ENCODE measurements at regions of chr11 and their contacts with region 1.

Region 1: DNA sequence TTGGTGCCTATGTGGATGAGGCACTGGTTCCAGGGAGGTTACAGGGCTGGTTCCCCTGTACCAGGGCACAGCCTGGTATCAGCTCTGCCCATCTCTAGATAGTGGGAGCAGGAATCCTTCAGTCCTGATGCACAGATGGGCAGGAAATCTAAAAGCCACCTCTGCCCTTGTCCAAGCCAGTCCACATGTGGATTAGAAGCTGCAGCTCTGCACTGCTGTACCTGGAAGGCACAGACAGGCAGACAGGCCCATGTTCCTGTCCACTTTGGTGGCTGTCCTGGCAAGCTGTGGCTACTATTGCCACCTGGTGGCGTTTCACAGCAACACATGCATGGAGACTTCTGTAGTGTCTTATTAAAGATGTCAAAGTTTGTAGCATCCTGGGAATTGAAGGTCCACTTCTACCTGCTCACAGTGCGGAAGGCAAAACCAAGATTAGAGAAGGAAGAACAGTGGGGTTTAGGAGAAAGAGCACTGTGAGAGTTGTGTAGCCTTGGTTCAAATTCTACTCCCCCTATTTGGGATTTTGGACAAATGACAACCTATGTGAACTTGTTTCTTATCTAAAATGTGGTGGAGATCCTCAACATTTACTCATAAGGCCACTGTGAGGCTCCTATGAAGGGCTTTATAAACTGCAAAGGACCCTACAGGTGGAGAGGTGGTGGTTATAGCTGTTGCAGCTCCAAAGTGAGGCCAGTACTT is 30.1 kb downstream of the NAV2 start:
- DNase-seq: peak; percentile 78
- H3K4me3 Mint-ChIP-seq: no peak overlapping the region
- H3K27ac Mint-ChIP-seq: no peak overlapping the region
- H3K4me1 Mint-ChIP-seq: peaks cover 15% of the 10 kb centered on the region
- H3K27me3 Mint-ChIP-seq: no peaks in the 10 kb centered on the region
- CTCF ChIP-seq: peak; percentile 89

Region 2: DNA sequence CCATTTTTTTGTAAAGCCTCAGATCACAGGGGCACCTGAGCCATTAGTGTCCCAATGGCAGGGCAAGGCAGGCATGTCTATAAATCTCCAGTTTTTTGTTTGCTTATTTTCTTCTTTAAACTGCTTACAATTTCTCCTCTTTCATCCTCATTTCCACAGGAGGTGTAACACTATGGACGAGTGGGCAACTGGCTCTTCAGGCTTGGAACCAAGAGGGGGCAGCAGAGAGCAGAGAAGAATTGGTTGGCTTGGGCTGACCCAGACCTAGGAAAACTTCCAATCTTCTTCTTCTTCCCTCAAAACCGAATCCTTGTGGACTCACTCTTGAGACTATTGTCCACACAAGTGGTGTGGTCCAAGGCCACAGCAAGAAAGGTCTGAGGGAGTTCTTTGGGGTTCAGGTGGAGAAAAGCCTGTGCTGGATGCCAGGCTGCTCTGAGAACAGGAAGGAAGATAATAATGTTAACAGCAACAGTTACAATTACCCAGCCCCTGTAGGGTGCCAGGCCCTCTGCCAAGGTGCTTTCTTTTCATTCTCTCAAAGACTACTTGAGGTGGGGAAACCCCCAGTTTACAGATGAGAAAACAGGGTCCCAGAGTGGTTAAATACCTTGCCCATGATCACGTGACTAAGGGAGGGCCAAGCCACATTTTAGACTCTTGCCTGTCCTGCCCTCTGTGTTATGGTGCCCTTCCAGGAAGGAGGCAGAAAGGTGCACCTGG is 431.3 kb before region 1 on chr11:
- CTCF ChIA-PET with region 1: interaction called, 4 read pairs
- POLR2A ChIA-PET with region 1: no interaction called
- intact Hi-C with region 1: loop called (anchors 5 kb)
- DNase-seq: peak; percentile 71
- H3K4me3 Mint-ChIP-seq: no peak overlapping the region
- H3K27ac Mint-ChIP-seq: no peak overlapping the region
- H3K4me1 Mint-ChIP-seq: peaks cover 5% of the 10 kb centered on the region
- H3K27me3 Mint-ChIP-seq: no peaks in the 10 kb centered on the region
- CTCF ChIP-seq: peak; percentile 59

Region 3: GRCh38 chr11:19561011-19561410 is 181.7 kb before region 1 on chr11:
- CTCF ChIA-PET with region 1: interaction called, 408 read pairs
- POLR2A ChIA-PET with region 1: interaction called, 7 read pairs
- intact Hi-C with region 1: loop called (anchors 1 kb)
- DNase-seq: peak; percentile 38
- H3K4me3 Mint-ChIP-seq: no peak overlapping the region
- H3K27ac Mint-ChIP-seq: no peak overlapping the region
- H3K4me1 Mint-ChIP-seq: peaks cover 6% of the 10 kb centered on the region
- H3K27me3 Mint-ChIP-seq: peaks cover 5% of the 10 kb centered on the region
- CTCF ChIP-seq: no peak

Region 4: GRCh38 chr11:19573666-19574065 is 169.1 kb before region 1 on chr11:
- CTCF ChIA-PET with region 1: interaction called, 408 read pairs
- POLR2A ChIA-PET with region 1: no interaction called
- intact Hi-C with region 1: no loop called
- DNase-seq: no peak
- H3K4me3 Mint-ChIP-seq: no peak overlapping the region
- H3K27ac Mint-ChIP-seq: no peak overlapping the region
- H3K4me1 Mint-ChIP-seq: no peaks in the 10 kb centered on the region
- H3K27me3 Mint-ChIP-seq: no peaks in the 10 kb centered on the region
- CTCF ChIP-seq: no peak

Region 5: GRCh38 chr11:19607652-19608360 is 134.9 kb before region 1 on chr11:
- CTCF ChIA-PET with region 1: interaction called, 10 read pairs
- POLR2A ChIA-PET with region 1: no interaction called
- intact Hi-C with region 1: no loop called
- DNase-seq: no peak
- H3K4me3 Mint-ChIP-seq: no peak overlapping the region
- H3K27ac Mint-ChIP-seq: no peak overlapping the region
- H3K4me1 Mint-ChIP-seq: peaks cover 10% of the 10 kb centered on the region
- H3K27me3 Mint-ChIP-seq: no peaks in the 10 kb centered on the region
- CTCF ChIP-seq: no peak

Region 6: DNA sequence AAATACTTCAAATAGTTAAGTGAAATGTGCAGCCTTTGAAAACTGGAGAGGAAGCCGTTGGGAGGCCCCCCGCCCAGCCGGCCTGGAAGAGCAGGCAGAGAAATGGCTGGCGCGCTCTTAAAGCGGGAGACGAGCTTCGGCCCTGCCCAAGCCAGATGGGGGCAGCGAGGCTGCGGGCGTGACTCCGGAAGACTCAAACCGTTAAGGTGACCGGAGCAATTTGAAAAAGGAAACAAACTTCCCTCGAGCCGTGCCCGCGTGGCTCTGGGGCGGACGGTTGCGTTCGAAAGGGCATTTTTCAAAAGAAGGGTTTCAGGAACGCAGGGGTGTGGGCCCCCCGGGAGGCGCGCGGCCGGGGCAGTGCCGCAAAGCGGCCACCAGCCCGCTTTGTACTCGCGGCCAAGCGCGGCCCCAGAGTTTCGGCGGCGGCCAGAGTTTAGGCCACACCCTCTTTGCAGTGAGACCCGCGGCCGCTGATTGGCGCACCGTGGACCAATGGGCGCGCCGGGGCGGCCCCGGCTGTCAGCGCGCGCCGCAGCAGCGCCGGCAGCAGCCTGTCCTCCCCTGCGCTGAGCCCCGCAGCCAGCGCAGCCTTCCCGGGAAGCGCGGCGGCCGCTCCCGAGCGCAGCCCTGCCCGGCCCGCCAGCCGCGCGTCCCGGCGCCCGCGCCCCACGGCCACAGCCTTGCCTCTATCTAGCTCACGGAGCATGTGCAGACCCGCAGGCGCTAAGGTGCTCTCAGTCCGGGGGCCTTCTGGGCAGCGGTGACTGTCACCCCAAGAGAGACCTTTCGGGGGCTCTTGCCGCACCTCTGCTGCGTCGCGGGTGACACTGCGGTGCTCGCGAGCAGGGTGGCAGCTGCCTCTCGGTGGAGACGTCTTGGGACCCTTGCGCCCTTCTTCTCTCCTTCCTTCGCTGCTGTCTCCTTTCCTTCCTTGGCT is 30.2 kb before region 1 on chr11 and contains the start of gene NAV2:
- CTCF ChIA-PET with region 1: interaction called, 11 read pairs
- POLR2A ChIA-PET with region 1: interaction called, 3 read pairs
- intact Hi-C with region 1: loop called (anchors 2 kb)
- DNase-seq: peak; percentile 94
- H3K4me3 Mint-ChIP-seq: peak within 1 kb of the TSS; percentile 85
- H3K27ac Mint-ChIP-seq: peak within 1 kb of the TSS; percentile 94
- H3K4me1 Mint-ChIP-seq: peaks cover 34% of the 10 kb centered on the region
- H3K27me3 Mint-ChIP-seq: no peaks in the 10 kb centered on the region
- CTCF ChIP-seq: no peak
- total RNA-seq, gene NAV2: 116 and 139 TPM in 2 replicates

Region 7: DNA sequence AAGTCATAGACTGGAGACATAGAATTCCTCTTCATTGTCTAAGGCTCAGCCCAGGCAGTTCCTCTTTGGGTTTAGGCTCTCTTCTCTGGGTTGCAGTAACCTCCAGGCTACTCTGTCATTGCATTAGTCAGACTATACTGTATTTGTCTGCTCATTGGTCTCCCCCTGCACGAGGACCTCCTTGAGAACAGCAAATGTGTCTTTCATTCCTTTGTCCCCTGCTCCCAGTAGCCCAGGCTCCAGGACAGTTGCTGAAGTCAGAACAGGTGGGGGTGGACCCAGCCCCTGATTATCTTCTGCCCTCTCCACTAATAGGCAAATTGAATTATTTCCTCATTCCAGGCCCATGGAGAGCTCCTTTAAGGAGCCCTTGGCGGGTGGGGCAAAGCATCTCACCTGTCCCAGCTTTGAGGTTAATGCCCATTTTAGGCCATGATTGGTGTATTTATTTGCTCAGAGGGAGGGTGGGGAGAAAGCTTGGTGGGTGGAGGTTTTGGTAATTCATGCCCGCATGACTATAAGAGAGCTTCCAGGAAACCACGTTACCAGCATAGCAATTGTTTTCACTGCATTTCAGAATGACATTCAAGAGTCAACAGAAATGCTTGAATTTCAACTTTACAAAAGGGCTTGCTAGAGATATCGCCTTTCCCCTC is 10.8 kb after region 1 on chr11:
- CTCF ChIA-PET with region 1: interaction called, 13 read pairs
- POLR2A ChIA-PET with region 1: no interaction called
- intact Hi-C with region 1: no loop called
- DNase-seq: no peak
- H3K4me3 Mint-ChIP-seq: no peak overlapping the region
- H3K27ac Mint-ChIP-seq: no peak overlapping the region
- H3K4me1 Mint-ChIP-seq: no peaks in the 10 kb centered on the region
- H3K27me3 Mint-ChIP-seq: no peaks in the 10 kb centered on the region
- CTCF ChIP-seq: no peak